OCI-LY7 (cell line): ENCODE measurements at regions of chr22 and their contacts with region 1.

Region 1: DNA sequence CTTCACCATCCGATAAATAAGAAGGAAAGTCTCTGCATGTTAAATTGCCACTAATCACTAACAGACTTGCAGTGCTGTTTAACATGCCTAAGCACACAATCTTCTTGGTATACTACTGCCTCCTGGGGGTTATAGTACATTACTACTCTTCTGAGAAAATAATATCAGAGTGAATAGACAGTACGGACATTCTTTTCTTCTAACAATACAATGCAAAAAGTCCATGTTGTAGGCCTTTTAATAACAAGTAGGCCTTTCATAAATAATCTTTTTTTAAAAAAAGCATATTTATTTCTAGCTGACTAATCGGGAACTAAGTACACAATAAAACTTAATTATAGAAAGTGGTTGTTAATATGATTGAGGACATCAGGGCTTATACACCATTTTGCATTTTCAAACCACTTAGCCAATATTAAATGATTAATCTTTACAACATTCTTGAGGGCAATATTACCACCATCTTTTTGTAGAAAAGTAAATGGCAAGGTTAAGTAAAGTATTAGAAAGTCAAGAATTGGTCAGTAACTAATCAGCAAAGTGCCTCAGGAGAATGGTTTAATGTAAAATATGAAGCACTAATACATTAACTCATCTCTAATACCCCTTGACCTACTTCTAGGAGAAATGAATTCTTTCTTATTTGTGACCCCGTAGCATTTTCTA is 84.7 kb downstream of the TTC28 start:
- DNase-seq: peak; percentile 62
- H3K4me3 ChIP-seq: no peak overlapping the region
- H3K27ac ChIP-seq: no peak overlapping the region
- H3K4me1 ChIP-seq: no peaks in the 10 kb centered on the region
- CTCF ChIP-seq: peak; percentile 85

Region 2: GRCh38 chr22:28019881-28020871 is 574.8 kb before region 1 on chr22:
- CTCF ChIA-PET with region 1: no interaction called
- POLR2A ChIA-PET with region 1: no interaction called
- intact Hi-C with region 1: loop called (anchors 2 kb)
- DNase-seq: peak; percentile 71
- H3K4me3 ChIP-seq: no peak overlapping the region
- H3K27ac ChIP-seq: no peak overlapping the region
- H3K4me1 ChIP-seq: peaks cover under 1% of the 10 kb centered on the region
- CTCF ChIP-seq: peak; percentile 97

Region 3: GRCh38 chr22:28051787-28052356 is 543.1 kb before region 1 on chr22:
- CTCF ChIA-PET with region 1: no interaction called
- POLR2A ChIA-PET with region 1: no interaction called
- intact Hi-C with region 1: loop called (anchors 10 kb)
- DNase-seq: peak; percentile 29
- H3K4me3 ChIP-seq: no peak overlapping the region
- H3K27ac ChIP-seq: no peak overlapping the region
- H3K4me1 ChIP-seq: no peaks in the 10 kb centered on the region
- CTCF ChIP-seq: peak; percentile 93